ENCODE measurements at regions of chr15 and their contacts with region 1.

Region 1: DNA sequence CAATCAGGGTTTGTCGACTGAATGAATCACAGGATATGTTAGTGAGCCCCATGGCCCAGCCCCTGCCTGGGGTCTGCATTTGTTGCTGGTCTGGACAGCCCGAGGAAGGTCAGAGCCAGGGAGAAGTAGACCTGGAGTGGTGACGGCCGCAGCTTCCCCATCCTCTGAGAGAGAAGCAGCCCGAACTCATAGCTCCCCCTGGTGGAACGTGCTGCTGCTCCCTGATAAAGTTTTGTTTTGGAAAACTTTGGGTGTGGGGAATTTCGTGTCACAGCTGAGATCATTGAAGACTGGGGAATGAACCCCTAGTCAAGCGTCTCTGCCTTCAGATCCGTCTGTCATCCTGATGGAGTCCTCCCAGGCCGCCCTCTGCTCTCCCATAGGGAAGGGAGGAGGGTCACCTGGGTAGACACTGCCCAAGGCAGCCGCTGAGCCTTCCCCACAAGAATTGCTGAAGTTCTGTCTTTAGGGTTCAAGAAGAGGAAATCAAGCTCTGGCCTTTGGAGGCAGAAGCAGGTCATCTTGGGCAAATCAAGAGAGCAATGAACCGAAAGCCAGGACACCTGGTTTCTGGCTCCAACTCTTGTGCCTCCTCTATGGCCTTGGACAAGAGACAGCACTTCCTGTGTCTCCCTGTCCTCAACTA is 60.5 kb downstream of the GLDN start:
- DNase-seq: peak; percentile 54
- ATAC-seq: peak; percentile 41; the same call in 1 of the 2 replicates
- H3K4me3 ChIP-seq: no peak overlapping the region
- H3K27ac ChIP-seq: no peak overlapping the region
- H3K4me1 ChIP-seq: peaks cover 22% of the 10 kb centered on the region
- H3K27me3 ChIP-seq: peaks cover 3% of the 10 kb centered on the region; the same call in 1 of the 2 replicates
- CTCF ChIP-seq: peak; percentile 72

Region 2: GRCh38 chr15:50911621-50912020 is 490.4 kb before region 1 on chr15:
- CTCF ChIA-PET with region 1: no interaction called
- POLR2A ChIA-PET with region 1: no interaction called
- intact Hi-C with region 1: no loop called
- DNase-seq: no peak
- ATAC-seq: no peak
- H3K4me3 ChIP-seq: no peak overlapping the region
- H3K27ac ChIP-seq: no peak overlapping the region
- H3K4me1 ChIP-seq: peaks cover 7% of the 10 kb centered on the region; the same call in 1 of the 2 replicates
- H3K27me3 ChIP-seq: no peaks in the 10 kb centered on the region
- CTCF ChIP-seq: no peak

Region 3: GRCh38 chr15:51227940-51228783 is 173.8 kb before region 1 on chr15:
- CTCF ChIA-PET with region 1: no interaction called
- POLR2A ChIA-PET with region 1: no interaction called
- intact Hi-C with region 1: loop called (anchors 5 kb)
- DNase-seq: peak; percentile 52
- ATAC-seq: peak; percentile 48; the same call in 1 of the 2 replicates
- H3K4me3 ChIP-seq: no peak overlapping the region
- H3K27ac ChIP-seq: no peak overlapping the region
- H3K4me1 ChIP-seq: peaks cover 25% of the 10 kb centered on the region
- H3K27me3 ChIP-seq: no peaks in the 10 kb centered on the region
- CTCF ChIP-seq: no peak

Region 4: DNA sequence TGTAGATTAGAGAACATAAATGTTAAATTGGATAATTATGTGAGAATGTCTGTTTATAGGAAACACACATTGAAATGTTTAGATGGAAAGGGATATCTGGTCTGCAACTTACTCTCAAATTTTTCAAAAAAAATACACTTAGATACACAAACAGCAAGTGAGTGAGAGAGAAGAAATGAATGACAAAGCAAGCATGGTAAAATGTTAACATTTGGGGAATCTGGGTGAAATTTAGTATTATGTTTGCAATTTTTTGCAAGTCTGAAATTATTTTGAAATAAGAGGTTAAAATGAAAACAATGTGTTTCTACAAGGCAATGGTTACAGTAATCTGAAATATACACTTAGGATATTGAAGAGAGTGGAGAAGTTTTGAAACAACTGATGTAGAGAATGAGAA is 73.7 kb after region 1 on chr15:
- CTCF ChIA-PET with region 1: no interaction called
- POLR2A ChIA-PET with region 1: no interaction called
- intact Hi-C with region 1: no loop called
- DNase-seq: no peak
- ATAC-seq: no peak
- H3K4me3 ChIP-seq: no peak overlapping the region
- H3K27ac ChIP-seq: no peak overlapping the region
- H3K4me1 ChIP-seq: no peaks in the 10 kb centered on the region
- H3K27me3 ChIP-seq: no peaks in the 10 kb centered on the region
- CTCF ChIP-seq: no peak

Region 5: DNA sequence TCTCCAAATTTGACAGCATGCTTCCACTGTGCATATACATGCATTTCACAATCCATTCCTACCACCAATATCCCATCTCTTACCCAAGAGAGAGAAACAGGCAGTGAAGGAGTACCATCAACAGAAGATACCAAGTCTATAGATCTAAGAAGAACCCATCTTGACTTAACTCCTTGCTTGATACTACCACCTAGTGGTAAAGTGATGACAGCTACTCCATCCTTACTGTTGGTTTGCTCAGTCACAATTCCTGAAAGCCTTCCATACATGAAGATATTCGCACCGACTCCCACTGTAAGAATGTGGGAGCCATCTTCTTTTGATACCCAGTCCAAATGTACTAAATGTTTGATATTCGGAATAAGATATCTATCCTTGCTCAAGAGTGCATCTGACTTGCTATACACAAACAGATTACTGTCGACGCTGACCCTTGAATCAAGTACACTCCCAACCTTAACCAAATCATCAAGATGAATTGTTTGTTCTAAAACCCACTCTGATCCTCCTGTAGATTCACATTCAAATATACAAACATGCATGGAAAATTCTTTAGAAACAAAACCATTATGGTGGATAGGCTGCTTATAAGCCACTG is 97.5 kb after region 1 on chr15:
- CTCF ChIA-PET with region 1: interaction called, 7 read pairs
- POLR2A ChIA-PET with region 1: no interaction called
- intact Hi-C with region 1: loop called (anchors 2 kb)
- DNase-seq: peak; percentile 60
- ATAC-seq: peak; percentile 71
- H3K4me3 ChIP-seq: no peak overlapping the region
- H3K27ac ChIP-seq: no peak overlapping the region
- H3K4me1 ChIP-seq: peaks cover 12% of the 10 kb centered on the region
- H3K27me3 ChIP-seq: no peaks in the 10 kb centered on the region
- CTCF ChIP-seq: peak; percentile 77